Prostate gland (tissue), 2 donors: ENCODE measurements at regions of chr2 and their contacts with region 1.

Region 1: GRCh38 chr2:219057709-219058540 is 2.8 kb downstream of the IHH start:
- DNase-seq: peak; percentile 70
- H3K4me3 ChIP-seq: peak overlapping the region in 1 of 2 donors; percentile 45
- H3K27ac ChIP-seq: no peak overlapping the region
- H3K4me1 ChIP-seq: peaks cover 16% of the 10 kb centered on the region
- H3K27me3 ChIP-seq: peaks cover 3% of the 10 kb centered on the region
- CTCF ChIP-seq: peak; percentile 77 to 97 (median 89)
- POLR2A ChIP-seq: no peak

Region 2: GRCh38 chr2:219119422-219120043 is 61.6 kb after region 1 on chr2:
- intact Hi-C with region 1: loop called (anchors 5 kb)
- DNase-seq: peak; percentile 70
- H3K4me3 ChIP-seq: no peak overlapping the region
- H3K27ac ChIP-seq: no peak overlapping the region
- H3K4me1 ChIP-seq: peaks cover 22% of the 10 kb centered on the region
- H3K27me3 ChIP-seq: no peaks in the 10 kb centered on the region
- CTCF ChIP-seq: peak; percentile 67 to 81 (median 77)
- POLR2A ChIP-seq: no peak

Region 3: DNA sequence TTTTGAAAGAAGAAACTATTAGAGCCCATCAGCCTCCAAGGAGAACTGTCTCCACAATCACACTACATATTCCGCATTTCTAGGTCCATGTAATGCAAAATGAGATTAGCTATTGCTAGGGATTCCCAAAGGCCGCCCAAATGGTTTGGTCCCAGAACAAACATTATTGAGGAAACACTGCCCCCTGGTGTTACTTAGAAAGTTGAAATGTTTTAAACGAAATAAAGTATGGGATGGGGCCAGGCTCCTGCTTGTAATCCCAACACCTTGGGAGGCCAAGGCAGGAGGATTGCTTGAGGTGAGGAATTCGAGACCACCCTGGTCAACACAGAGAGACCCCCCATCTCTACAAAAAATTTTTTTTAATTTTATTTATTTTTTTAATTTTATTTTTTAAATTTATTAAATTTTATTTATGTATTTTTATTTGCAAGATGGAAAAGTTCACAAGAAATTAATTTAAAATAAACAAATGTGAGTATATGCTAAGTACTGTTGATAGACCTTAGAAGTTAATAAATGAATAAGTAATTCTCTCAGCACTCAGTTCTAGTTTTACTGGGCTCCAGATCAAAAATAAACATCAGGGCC is 97.2 kb after region 1 on chr2:
- intact Hi-C with region 1: loop called (anchors 2 kb)
- DNase-seq: peak; percentile 72
- H3K4me3 ChIP-seq: no peak overlapping the region
- H3K27ac ChIP-seq: no peak overlapping the region
- H3K4me1 ChIP-seq: no peaks in the 10 kb centered on the region
- H3K27me3 ChIP-seq: no peaks in the 10 kb centered on the region
- CTCF ChIP-seq: peak; percentile 36 to 82 (median 78)
- POLR2A ChIP-seq: no peak